ENCODE measurements at regions of chr2 and their contacts with region 1.

Region 1: DNA sequence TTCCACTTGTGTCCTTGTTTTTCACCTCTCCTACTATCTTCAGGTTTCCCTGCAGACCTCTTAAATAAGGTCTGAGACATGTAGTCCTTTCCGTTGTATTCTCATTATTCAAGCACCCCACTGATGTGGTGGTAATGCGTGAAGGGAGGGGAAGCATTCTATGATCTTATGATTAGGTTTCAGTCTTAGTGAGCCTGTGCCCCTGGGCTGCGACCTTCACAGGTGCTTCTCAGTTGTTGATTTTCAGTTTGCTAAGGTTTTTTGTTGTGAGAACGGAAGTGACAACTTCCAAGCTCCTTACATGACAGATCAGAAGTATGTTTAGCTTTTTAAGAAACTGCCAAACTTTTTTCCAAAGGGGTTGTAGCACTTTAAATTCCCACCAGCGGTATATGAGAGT is 41.3 kb downstream of the VPS54 start:
- DNase-seq: peak in 2 of 9 experiments; percentile 7 to 20
- ATAC-seq: peak; percentile 54
- H3K4me3 ChIP-seq: no peak overlapping the region
- H3K4me3 Mint-ChIP-seq: peak overlapping the region; percentile 17
- H3K27ac ChIP-seq: peak overlapping the region in 1 of 2 experiments; percentile 1
- H3K27ac Mint-ChIP-seq: peak overlapping the region; percentile 69
- H3K4me1 ChIP-seq: peaks cover 8% of the 10 kb centered on the region
- H3K4me1 Mint-ChIP-seq: peaks cover 19% of the 10 kb centered on the region
- H3K27me3 ChIP-seq: no peaks in the 10 kb centered on the region
- H3K27me3 Mint-ChIP-seq: no peaks in the 10 kb centered on the region
- CTCF ChIP-seq: no peak

Region 2: DNA sequence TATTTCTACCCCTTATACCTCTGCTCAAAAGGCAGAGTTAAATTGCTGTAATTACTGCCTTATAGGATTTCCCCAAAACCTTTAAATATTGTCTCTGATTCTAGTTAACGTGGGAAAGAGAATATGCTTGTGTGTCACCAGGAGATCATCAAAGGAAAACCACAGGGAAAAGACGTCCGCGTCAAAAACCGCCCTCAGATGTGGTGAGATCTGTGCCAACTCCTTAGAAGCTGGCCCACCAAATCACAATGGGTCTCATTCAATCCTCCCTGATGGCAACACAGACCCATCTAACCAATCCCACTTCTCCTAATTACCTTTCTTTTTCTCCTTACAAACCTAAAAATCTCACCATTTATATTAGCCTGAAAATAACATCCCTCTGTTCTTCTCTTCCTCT is 16.0 kb after region 1 on chr2:
- CTCF ChIA-PET with region 1: no interaction called
- POLR2A ChIA-PET with region 1: no interaction called
- intact Hi-C with region 1: no loop called
- DNase-seq: peak in 4 of 9 experiments; percentile 7 to 43 (median 20)
- ATAC-seq: no peak
- H3K4me3 ChIP-seq: no peak overlapping the region
- H3K4me3 Mint-ChIP-seq: no peak overlapping the region
- H3K27ac ChIP-seq: no peak overlapping the region
- H3K27ac Mint-ChIP-seq: no peak overlapping the region
- H3K4me1 ChIP-seq: peaks cover 6% of the 10 kb centered on the region
- H3K4me1 Mint-ChIP-seq: peaks cover 21% of the 10 kb centered on the region
- H3K27me3 ChIP-seq: no peaks in the 10 kb centered on the region
- H3K27me3 Mint-ChIP-seq: no peaks in the 10 kb centered on the region
- CTCF ChIP-seq: no peak

Region 3: DNA sequence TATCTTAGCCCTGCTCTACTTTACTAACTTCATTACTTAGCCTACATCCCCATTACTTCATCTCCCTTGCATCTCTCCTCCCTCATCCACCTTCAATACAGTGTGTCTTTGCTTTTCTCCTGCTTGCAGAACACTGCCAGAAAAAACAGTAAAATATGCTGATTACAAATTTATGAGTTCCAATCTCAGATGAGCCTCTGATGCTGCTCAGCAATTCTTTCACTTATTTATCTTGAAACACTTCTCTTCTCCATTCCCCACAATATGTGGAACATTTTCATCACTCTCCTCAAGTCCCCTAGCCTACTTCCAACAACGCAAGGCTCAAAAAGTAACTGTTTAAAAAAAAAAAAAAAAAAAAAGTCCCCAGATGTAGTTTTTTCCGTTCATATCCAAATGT is 34.2 kb after region 1 on chr2:
- CTCF ChIA-PET with region 1: no interaction called
- POLR2A ChIA-PET with region 1: no interaction called
- intact Hi-C with region 1: loop called in 1 of 2 experiments (anchors 5 kb)
- DNase-seq: no peak
- ATAC-seq: no peak
- H3K4me3 ChIP-seq: no peak overlapping the region
- H3K4me3 Mint-ChIP-seq: no peak overlapping the region
- H3K27ac ChIP-seq: no peak overlapping the region
- H3K27ac Mint-ChIP-seq: no peak overlapping the region
- H3K4me1 ChIP-seq: peaks cover 8% of the 10 kb centered on the region
- H3K4me1 Mint-ChIP-seq: peaks cover 51% of the 10 kb centered on the region
- H3K27me3 ChIP-seq: no peaks in the 10 kb centered on the region
- H3K27me3 Mint-ChIP-seq: no peaks in the 10 kb centered on the region
- CTCF ChIP-seq: no peak